Activated CD8-positive, alpha-beta memory T cell treated with anti-CD3 and anti-CD28 coated beads, Interleukin-2, amount 10 ng/mL, durations not matched to agents 7 days and 5 days (primary cell): ENCODE measurements at regions of chr9 and their contacts with region 1.

Region 1: GRCh38 chr9:133042676-133043075 is 11.9 kb downstream of the GTF3C5 start:
- DNase-seq: no peak
- ATAC-seq: no peak
- H3K4me3 Mint-ChIP-seq: no peak overlapping the region
- H3K27ac Mint-ChIP-seq: peak overlapping the region; percentile 41
- H3K4me1 Mint-ChIP-seq: peaks cover 6% of the 10 kb centered on the region
- H3K27me3 Mint-ChIP-seq: no peaks in the 10 kb centered on the region

Region 2: GRCh38 chr9:133030317-133031129 is 12.2 kb before region 1 on chr9 and contains the start of gene GTF3C5:
- CTCF ChIA-PET with region 1: interaction called, 18 read pairs
- DNase-seq: peak; percentile 96
- ATAC-seq: peak; percentile 97
- H3K4me3 Mint-ChIP-seq: peak within 1 kb of the TSS; percentile 90
- H3K27ac Mint-ChIP-seq: peak within 1 kb of the TSS; percentile 86
- H3K4me1 Mint-ChIP-seq: peaks cover 38% of the 10 kb centered on the region
- H3K27me3 Mint-ChIP-seq: no peaks in the 10 kb centered on the region
- total RNA-seq, gene GTF3C5: 83.8 to 89.0 TPM

Region 3: GRCh38 chr9:133532937-133533668 is 490.4 kb after region 1 on chr9:
- CTCF ChIA-PET with region 1: no interaction called
- DNase-seq: peak; percentile 66
- ATAC-seq: peak; percentile 52
- H3K4me3 Mint-ChIP-seq: no peak overlapping the region
- H3K27ac Mint-ChIP-seq: no peak overlapping the region
- H3K4me1 Mint-ChIP-seq: no peaks in the 10 kb centered on the region
- H3K27me3 Mint-ChIP-seq: peaks cover 24% of the 10 kb centered on the region